ENCODE measurements at regions of chr3 and their contacts with region 1.

Region 1: GRCh38 chr3:134197681-134198261 is 52.9 kb downstream of the RYK start:
- DNase-seq: peak in 2 of 9 experiments; percentile 57 to 64
- ATAC-seq: peak; percentile 71
- H3K4me3 ChIP-seq: no peak overlapping the region
- H3K4me3 Mint-ChIP-seq: no peak overlapping the region
- H3K27ac ChIP-seq: no peak overlapping the region
- H3K27ac Mint-ChIP-seq: no peak overlapping the region
- H3K4me1 ChIP-seq: no peaks in the 10 kb centered on the region
- H3K4me1 Mint-ChIP-seq: peaks cover 2% of the 10 kb centered on the region
- H3K27me3 ChIP-seq: no peaks in the 10 kb centered on the region
- H3K27me3 Mint-ChIP-seq: no peaks in the 10 kb centered on the region
- CTCF ChIP-seq: peak; percentile 71

Region 2: GRCh38 chr3:134373994-134374790 is 176.4 kb after region 1 on chr3 and contains the start of gene AMOTL2:
- CTCF ChIA-PET with region 1: interaction called, 3 read pairs
- POLR2A ChIA-PET with region 1: no interaction called
- intact Hi-C with region 1: loop called (anchors 1 to 5 kb)
- DNase-seq: peak in 1 of 9 experiments; percentile 18
- ATAC-seq: no peak
- H3K4me3 ChIP-seq: peak within 1 kb of the TSS; percentile 8 to 30
- H3K4me3 Mint-ChIP-seq: peak within 1 kb of the TSS; percentile 81
- H3K27ac ChIP-seq: no peak within 1 kb of the TSS
- H3K27ac Mint-ChIP-seq: no peak within 1 kb of the TSS
- H3K4me1 ChIP-seq: peaks cover 6% of the 10 kb centered on the region
- H3K4me1 Mint-ChIP-seq: peaks cover 10% of the 10 kb centered on the region
- H3K27me3 ChIP-seq: peaks cover 5 to 7% of the 10 kb centered on the region in 2 experiments
- H3K27me3 Mint-ChIP-seq: peaks cover 36% of the 10 kb centered on the region
- CTCF ChIP-seq: no peak
- total RNA-seq, gene AMOTL2: not detected

Region 3: DNA sequence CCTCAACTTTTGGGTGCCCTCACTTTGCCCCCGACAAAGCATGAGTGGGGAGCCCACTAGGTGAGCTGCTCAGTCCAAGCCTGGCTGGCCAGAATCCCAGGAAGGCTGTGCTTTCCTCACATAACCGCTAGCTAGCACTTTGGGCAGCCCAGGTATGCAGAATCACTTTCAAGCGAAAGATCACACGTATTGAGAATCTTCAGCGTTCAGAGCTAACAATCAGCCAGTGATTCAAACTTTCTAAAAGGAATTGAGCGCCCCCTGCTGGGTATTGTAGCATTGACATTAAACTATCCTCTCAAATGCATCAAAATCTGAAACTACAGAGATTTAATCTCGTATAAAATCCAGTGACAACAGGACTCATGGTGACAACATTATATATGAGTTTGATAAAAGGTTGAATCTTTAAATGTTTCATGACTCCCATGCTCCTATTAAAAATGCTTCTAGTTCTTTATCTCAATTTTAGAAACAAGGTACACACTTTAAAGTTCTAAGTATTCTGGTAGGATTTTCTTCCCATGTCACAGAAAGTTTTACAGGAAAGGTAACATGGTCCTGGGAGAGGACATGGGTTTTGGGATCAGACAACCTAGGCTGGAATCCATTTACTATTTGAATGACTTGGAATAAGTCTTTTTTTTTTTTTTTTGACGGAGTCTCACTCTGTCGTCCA is 276.2 kb after region 1 on chr3:
- CTCF ChIA-PET with region 1: interaction called, 8 read pairs
- POLR2A ChIA-PET with region 1: interaction called, 3 read pairs
- intact Hi-C with region 1: loop called (anchors 1 kb)
- DNase-seq: peak; percentile 55 to 85 (median 75)
- ATAC-seq: peak; percentile 85
- H3K4me3 ChIP-seq: no peak overlapping the region
- H3K4me3 Mint-ChIP-seq: no peak overlapping the region
- H3K27ac ChIP-seq: no peak overlapping the region
- H3K27ac Mint-ChIP-seq: no peak overlapping the region
- H3K4me1 ChIP-seq: peaks cover 4% of the 10 kb centered on the region
- H3K4me1 Mint-ChIP-seq: peaks cover 5% of the 10 kb centered on the region
- H3K27me3 ChIP-seq: no peaks in the 10 kb centered on the region
- H3K27me3 Mint-ChIP-seq: no peaks in the 10 kb centered on the region
- CTCF ChIP-seq: peak; percentile 83

Region 4: GRCh38 chr3:134494495-134494894 is 296.7 kb after region 1 on chr3:
- CTCF ChIA-PET with region 1: interaction called, 3 read pairs
- POLR2A ChIA-PET with region 1: no interaction called
- intact Hi-C with region 1: loop called (anchors 5 kb)
- DNase-seq: no peak
- ATAC-seq: no peak
- H3K4me3 ChIP-seq: no peak overlapping the region
- H3K4me3 Mint-ChIP-seq: no peak overlapping the region
- H3K27ac ChIP-seq: no peak overlapping the region
- H3K27ac Mint-ChIP-seq: no peak overlapping the region
- H3K4me1 ChIP-seq: no peaks in the 10 kb centered on the region
- H3K4me1 Mint-ChIP-seq: peaks cover 53% of the 10 kb centered on the region
- H3K27me3 ChIP-seq: no peaks in the 10 kb centered on the region
- H3K27me3 Mint-ChIP-seq: no peaks in the 10 kb centered on the region
- CTCF ChIP-seq: no peak

Measured in CD8-positive, alpha-beta T cell (primary cell).